Activated CD4-positive, alpha-beta memory T cell treated with anti-CD3 and anti-CD28 coated beads for 36 hours (primary cell): ENCODE measurements at regions of chr4 and their contacts with region 1.

Region 1: GRCh38 chr4:1693129-1693896 is 9.2 kb upstream of the FAM53A start:
- DNase-seq: peak; percentile 84
- H3K4me3 Mint-ChIP-seq: no peak overlapping the region
- H3K27ac Mint-ChIP-seq: peak overlapping the region; percentile 54
- H3K4me1 Mint-ChIP-seq: peaks cover 7% of the 10 kb centered on the region
- H3K27me3 Mint-ChIP-seq: no peaks in the 10 kb centered on the region

Region 2: DNA sequence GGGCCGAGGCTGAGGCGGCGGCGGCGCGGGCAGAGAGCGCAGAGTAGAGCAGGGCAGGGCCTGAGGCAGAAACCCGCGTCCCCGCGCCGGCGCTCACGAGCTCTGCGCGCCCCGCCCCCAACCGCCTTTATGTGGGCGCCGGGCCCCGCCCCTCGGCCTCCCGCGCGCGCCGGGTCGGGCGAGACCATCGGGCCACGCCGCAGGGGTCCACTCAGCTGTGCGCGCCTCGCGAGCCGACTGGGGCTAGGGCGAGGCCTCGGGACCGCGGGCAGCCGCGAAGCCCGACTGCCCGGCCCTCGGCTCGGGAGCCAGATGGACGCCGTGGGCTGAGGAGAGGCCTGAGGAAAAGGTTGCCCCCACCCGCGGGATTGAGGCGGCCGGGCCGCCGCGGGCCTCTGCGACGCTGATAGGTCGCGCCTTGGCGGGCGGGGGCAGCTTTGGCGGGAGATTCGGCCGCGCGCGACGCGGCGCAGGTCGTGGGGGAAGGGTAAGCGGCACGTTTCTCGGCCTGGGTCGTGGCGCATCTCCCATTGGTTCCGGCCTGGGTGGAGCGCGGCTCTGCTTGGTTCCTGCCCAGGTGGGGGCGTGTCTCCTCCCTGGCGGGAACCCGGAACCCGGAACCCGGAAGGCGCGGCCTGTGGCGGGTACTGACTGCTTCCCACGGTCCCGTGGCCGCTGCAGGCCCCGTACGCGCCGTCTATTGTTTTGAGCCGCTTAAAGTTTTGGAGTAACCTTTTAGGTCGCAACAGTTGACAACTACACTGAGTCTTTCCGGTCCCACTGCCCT is 19.1 kb after region 1 on chr4 and contains the start of gene SLBP:
- CTCF ChIA-PET with region 1: interaction called, 203 read pairs
- POLR2A ChIA-PET with region 1: interaction called, 21 read pairs
- intact Hi-C with region 1: no loop called
- DNase-seq: peak; percentile 99
- H3K4me3 Mint-ChIP-seq: peak within 1 kb of the TSS; percentile 99
- H3K27ac Mint-ChIP-seq: peak within 1 kb of the TSS; percentile 94
- H3K4me1 Mint-ChIP-seq: peaks cover 61% of the 10 kb centered on the region
- H3K27me3 Mint-ChIP-seq: no peaks in the 10 kb centered on the region
- total RNA-seq, gene SLBP: 103 to 106 TPM

Region 3: GRCh38 chr4:1721004-1721665 is 27.8 kb after region 1 on chr4 and contains the starts of genes TACC3 and TMEM129:
- CTCF ChIA-PET with region 1: interaction called, 142 read pairs
- POLR2A ChIA-PET with region 1: interaction called, 7 read pairs
- intact Hi-C with region 1: loop called (anchors 1 kb)
- DNase-seq: peak; percentile 97
- H3K4me3 Mint-ChIP-seq: peak within 1 kb of the TSS; percentile 89
- H3K27ac Mint-ChIP-seq: peak within 1 kb of the TSS; percentile 99
- H3K4me1 Mint-ChIP-seq: peaks cover 52% of the 10 kb centered on the region
- H3K27me3 Mint-ChIP-seq: no peaks in the 10 kb centered on the region
- total RNA-seq, gene TACC3: 194 to 201 TPM
- total RNA-seq, gene TMEM129: 16.2 to 18.1 TPM

Region 4: DNA sequence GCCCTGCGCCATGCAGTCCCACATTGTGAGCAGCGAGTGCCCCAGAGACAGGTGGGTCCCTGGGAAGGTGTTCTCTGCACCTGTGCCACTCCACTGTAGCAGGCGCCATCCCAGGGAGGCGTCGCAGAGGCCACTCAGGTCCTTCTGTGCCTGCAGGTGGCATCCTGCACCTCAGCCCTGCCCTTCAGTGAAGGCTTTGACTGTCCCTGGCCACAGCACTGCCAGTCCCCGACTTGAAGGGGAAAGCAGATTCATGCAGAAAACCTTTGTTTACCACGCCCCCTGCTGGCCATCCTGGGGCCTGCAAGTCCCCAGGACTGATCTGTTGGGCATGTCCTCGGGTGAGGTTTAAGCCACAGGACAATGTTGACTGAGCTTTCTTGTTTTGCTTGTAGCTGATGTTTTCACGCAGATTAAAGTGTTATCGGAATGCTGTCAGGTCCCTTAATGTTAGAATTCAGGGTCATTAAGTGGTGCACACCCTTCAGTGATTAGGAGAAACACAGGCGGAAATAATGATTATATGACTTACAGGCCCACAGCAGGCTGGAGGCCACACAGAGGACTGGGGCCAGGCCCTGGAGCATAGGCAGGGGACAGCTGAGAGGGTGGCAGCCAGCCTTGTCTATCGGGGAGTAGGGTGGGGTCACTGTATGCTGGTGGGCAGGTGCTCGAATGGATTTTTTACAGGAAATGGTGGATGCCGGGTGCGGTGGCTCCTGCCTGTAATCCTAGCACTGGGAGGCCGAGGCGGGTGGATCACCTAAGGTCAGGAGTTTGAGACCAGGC is 33.0 kb after region 1 on chr4:
- CTCF ChIA-PET with region 1: interaction called, 142 read pairs
- POLR2A ChIA-PET with region 1: interaction called, 7 read pairs
- intact Hi-C with region 1: loop called (anchors 1 kb)
- DNase-seq: peak; percentile 92
- H3K4me3 Mint-ChIP-seq: no peak overlapping the region
- H3K27ac Mint-ChIP-seq: peak overlapping the region; percentile 61
- H3K4me1 Mint-ChIP-seq: peaks cover 72% of the 10 kb centered on the region
- H3K27me3 Mint-ChIP-seq: no peaks in the 10 kb centered on the region

Region 5: DNA sequence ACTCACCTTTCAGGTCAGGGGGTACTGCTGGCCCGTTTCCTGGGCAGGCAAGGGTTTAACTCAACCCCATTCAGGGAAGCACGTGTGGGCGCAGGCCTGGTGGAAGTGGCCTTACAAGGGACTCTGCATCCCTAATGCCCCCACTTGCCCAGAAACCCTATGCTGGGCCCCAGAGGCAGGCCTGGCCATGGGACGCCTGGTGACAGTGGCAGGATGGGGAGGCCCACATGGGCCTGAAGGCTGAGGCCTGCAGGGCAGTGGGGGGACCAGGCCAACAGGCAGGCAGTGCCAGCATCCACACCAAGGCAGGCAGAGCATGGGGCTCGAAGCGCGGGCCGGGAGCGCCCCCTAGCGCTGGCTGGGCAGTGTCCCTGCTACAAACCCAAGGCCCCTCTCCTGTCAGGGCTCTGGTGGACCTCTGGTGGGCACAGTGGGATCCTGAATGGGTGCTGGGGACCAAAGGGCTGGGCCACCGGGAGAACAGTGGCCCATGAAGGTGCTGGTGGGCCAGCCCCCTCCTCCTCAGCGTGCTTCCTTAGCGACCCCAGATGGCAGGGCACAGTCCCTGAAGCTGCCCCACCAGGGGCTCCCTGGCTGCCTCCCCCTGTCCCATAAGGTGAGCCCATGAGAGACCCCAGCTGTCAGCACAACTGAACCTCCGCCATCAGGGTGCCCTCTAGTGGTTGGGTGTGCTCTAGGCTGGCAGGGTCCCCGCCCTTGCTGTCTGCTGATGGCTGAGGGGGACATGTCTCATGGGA is 116.6 kb after region 1 on chr4:
- CTCF ChIA-PET with region 1: interaction called, 8 read pairs
- POLR2A ChIA-PET with region 1: no interaction called
- intact Hi-C with region 1: loop called (anchors 1 kb)
- DNase-seq: peak; percentile 84
- H3K4me3 Mint-ChIP-seq: no peak overlapping the region
- H3K27ac Mint-ChIP-seq: no peak overlapping the region
- H3K4me1 Mint-ChIP-seq: no peaks in the 10 kb centered on the region
- H3K27me3 Mint-ChIP-seq: no peaks in the 10 kb centered on the region